GM13976 (cell line): ENCODE measurements at regions of chr9 and their contacts with region 1.

Region 1: DNA sequence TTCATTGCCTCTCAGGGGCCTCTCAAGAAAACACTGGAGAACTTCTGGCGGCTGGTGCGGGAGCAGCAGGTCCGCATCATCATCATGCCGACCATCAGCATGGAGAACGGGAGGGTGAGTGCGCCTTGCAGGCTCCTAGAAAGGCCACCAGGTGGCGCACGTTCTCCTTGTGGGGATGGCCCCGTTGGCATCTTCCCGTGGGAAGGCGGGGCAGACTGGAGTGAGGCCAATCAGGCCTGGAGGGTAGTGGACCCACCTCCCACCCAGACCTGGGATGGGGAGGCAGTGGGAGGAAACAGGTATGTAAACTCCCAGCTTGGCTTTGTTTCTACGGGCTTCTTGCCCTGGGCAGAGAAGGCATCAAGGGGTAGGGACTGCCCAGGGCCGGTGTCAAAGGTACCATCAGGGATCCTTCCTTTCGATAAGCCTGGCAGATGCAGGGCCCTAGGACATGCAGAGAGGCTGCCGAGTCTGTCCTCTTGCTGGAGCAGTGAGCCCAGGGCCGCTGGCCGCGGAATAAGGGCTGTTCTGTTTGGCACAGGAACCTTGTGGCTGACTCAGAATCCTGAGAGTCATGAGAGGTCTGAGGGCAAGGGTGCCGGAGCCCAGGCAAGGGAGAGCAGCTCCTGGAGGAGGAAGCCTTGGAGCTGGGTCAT is 18.9 kb upstream of the SPTLC1 start:
- DNase-seq: peak; percentile 84
- CTCF ChIP-seq: peak; percentile 89

Region 2: DNA sequence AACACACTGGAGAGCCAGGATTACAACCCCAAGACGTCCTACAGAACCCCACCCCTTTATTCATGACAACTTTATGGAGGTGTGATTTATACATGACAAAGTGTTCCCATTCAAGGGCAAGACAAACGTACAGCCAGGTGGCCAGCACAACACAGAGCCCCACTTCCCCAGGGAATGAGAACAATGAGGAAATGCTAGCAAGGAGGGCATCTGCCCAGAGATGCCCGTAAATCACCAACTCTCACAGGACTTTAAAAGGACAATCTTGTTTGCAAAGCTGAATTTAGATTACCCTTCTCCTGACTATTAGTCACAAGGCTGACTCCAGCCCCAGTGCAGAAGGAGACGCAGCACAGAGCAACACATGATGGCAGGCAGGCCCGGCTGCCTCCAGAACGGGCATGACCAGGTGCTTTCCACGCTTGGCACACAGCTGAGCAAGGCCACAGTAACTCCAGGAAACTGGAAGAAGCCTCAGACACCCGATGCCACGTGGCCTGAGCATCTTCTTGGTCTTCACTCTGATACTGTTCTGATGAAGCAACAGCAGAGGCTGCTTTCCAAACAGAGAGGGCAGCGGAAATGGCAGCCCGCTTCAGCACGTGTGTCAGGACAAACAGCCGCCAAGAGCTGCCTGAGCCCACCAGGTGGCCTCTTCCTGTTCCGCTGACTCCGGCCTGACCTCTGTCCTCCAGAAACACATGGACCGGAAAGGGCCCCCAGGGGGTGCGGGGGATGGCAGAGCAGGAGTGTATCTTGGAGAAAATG is 235.4 kb before region 1 on chr9:
- in situ Hi-C with region 1: no loop called
- DNase-seq: no peak
- CTCF ChIP-seq: no peak

Region 3: DNA sequence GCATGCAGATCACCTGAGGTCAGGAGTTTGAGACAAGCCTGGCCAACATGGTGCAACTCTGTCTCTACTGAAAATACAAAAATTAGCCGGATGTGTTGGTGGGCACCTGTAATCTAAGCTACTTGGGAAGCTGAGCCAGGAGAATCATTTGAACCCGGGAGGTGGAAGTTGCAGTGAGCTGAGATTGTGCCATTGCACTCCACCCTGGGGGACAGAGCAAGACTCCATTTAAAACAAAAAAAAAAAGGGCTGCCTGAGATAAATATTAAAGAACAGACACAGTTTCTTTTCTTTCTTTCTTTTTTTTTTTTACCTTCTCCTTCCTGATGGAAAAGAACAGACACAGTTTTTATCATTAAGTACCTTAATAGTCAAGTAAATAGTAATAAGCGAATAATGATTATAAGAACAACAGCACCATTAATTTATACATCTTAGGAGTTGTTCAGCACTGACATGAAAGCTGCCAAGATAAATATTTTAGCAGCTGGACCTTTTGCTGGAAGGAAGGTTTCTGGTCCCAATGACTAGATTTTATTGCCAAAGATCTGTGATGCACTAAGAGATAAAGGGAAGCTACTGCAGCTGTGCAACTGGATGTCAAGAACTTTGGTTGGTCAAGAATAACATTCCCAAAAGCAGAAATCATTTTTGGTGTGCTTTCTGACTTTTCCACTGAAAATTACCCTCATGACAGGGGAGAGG is 198.7 kb after region 1 on chr9:
- in situ Hi-C with region 1: no loop called
- DNase-seq: no peak
- CTCF ChIP-seq: no peak

Region 4: DNA sequence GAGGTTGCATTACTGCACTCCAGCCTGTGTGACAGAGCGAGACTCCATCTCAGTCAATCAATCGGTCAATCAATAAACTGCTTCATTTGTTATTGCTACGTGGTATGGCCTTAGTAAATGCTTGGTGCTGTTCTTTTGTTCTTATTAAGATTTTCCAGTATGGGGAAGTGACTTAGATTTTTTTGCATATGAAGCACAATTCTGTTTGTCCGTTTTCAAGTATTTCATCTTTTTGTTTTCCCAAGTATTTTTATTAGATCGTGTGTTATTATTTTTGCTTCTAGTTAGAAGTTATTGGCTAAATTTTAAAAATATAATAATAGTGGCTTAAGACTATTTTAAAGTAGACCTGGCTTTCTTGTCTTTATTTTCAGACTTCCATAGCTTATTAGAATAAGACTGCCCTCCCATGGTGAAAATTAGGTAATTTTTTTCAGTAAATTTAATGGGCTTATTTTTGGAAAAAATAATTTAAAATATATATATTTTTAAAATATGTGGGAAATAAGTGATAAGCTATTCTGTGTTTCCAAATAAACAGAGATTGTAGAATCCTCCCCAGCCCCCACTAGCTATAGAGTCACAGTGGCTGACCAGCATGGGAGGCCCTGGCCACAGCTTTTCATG is 304.9 kb after region 1 on chr9:
- in situ Hi-C with region 1: loop called (anchors 25 kb)
- DNase-seq: no peak
- CTCF ChIP-seq: no peak

Region 5: GRCh38 chr9:92634712-92635605 is 500.9 kb after region 1 on chr9:
- in situ Hi-C with region 1: loop called (anchors 10 kb)
- DNase-seq: peak; percentile 88
- CTCF ChIP-seq: peak; percentile 67

Region 6: DNA sequence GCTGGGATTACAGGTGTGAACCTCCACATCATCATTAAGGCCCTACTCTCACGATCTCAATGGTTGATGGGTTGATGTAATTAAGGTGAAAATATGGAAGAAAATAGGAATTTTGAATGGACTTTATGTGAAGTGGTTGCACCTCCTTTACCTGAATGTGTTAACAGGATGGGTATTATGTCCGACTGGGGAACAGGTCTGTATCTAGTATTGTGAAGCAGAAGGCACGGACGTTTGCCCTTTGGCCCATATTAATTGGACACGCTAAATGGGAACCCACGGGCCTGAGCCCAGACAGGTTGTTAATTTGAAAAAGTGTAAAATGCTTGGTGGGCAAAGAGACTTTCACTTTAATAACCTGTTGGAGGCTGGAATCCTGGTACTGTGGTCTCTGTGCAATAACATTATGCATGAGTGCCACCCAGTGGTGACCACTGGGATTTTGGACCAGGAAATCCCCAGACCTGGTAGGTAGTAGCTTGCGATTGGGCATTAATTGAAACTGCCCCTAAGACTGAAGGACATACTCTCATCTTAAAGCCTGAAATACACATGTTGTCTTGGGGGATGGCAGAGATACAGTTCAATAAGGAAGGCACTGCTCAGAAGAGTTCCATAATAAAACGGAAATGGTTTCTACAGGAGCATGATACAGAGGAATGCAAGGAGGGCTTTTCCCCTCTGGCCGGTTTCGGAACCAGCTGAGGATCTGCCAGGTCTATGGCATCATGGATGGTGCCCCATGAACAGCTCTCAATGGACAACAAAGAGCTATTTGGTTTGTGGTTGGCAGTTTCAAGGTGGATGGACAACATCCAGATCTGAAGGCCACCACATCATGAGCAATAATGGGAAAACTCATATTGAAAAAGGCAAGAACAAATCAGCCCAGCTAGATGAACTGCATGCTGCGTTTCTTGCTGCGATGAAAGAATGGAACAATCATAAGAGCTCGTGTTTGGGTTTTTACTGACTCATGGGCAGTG is 656.8 kb after region 1 on chr9:
- in situ Hi-C with region 1: loop called (anchors 25 kb)
- DNase-seq: peak; percentile 78
- CTCF ChIP-seq: peak; percentile 53